ENCODE measurements at regions of chr19 and their contacts with region 1.

Region 1: GRCh38 chr19:16185123-16185767 is at the start of gene FAM32A:
- DNase-seq: peak; percentile 99
- ATAC-seq: peak; percentile 98
- H3K4me3 Mint-ChIP-seq: peak within 1 kb of the TSS; percentile 100
- H3K27ac Mint-ChIP-seq: peak within 1 kb of the TSS; percentile 97
- H3K4me1 Mint-ChIP-seq: peaks cover 26% of the 10 kb centered on the region
- H3K27me3 Mint-ChIP-seq: no peaks in the 10 kb centered on the region
- total RNA-seq, gene FAM32A: 46.3 to 48.2 TPM

Region 2: DNA sequence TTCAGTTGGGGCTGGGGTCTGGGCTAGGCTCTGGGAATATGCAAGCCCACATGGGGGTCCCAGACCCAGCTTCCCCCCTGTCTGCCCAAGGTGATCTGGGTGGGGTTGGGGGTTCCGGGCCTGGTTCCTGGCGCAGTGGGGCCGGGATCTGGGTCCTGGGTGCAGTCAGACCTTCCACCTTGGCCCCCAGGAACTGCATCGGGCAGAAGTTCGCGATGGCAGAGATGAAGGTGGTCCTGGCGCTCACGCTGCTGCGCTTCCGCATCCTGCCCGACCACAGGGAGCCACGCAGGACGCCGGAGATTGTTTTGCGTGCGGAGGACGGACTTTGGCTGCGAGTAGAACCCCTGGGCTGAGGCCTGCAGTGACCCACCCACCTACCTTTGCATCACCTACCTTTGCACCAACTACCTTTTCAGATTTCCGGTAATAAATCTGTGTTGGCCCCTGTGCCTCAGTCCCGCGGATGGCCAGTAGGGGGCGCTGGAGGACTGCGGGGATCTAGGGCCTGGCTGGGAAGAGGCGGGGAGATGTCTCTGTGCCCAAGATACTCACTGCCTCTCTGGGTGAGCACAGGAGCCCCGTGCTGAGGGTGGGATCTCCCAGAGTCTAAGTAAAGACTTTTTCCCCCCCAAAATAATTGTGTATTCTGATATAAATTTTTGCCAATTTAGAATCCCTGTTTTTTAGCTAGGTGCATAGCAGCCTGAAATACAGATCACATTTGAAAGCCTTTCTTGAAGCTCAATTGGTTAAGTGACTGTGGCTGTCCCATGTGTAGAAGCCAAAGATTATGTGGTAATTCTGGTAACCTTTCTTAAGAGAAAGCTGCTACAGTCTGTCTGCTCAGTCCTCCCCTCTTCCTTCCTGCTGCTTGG is 556.0 kb before region 1 on chr19:
- CTCF ChIA-PET with region 1: interaction called, 3 read pairs
- POLR2A ChIA-PET with region 1: no interaction called
- intact Hi-C with region 1: loop called (anchors 1 to 5 kb)
- DNase-seq: peak; percentile 93
- ATAC-seq: peak; percentile 95
- H3K4me3 Mint-ChIP-seq: no peak overlapping the region
- H3K27ac Mint-ChIP-seq: no peak overlapping the region
- H3K4me1 Mint-ChIP-seq: peaks cover 3% of the 10 kb centered on the region
- H3K27me3 Mint-ChIP-seq: peaks cover 4% of the 10 kb centered on the region

Region 3: DNA sequence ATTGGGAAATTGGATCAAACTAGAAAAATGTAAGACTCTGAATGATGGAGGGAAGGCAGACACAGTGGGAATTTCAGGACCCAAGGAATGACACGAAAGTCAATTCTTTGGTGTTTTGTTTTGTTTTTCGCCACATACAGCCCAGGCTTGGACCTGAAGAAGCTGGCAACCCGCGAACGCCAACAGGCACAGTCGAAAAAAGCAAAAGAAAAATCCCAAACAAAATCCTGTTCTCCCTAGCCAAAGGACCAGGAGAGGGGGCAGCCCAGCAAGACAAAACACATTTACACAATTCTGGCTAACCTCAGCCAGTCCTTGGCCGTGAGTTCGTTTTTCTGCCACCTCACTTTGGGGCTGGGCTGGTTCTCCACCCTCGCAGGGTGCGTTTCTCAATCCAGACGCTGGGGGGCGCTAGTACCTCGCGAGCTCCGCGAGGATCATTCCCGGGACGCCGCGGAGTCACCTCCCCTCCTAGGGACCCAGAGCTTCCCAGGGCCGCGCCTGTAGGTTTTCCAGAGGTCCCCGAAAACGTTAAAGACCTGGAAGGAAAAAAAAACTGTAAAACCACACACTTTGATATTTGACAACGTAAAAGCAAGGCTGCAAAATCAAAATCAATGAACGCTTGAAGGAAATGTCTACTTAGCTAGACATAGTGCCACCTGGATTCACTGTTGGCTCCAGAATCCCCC is 143.8 kb before region 1 on chr19:
- CTCF ChIA-PET with region 1: interaction called, 53 read pairs
- POLR2A ChIA-PET with region 1: no interaction called
- intact Hi-C with region 1: loop called (anchors 1 kb)
- DNase-seq: peak; percentile 87
- ATAC-seq: peak; percentile 85
- H3K4me3 Mint-ChIP-seq: no peak overlapping the region
- H3K27ac Mint-ChIP-seq: no peak overlapping the region
- H3K4me1 Mint-ChIP-seq: peaks cover 4% of the 10 kb centered on the region
- H3K27me3 Mint-ChIP-seq: peaks cover 2% of the 10 kb centered on the region

Region 4: DNA sequence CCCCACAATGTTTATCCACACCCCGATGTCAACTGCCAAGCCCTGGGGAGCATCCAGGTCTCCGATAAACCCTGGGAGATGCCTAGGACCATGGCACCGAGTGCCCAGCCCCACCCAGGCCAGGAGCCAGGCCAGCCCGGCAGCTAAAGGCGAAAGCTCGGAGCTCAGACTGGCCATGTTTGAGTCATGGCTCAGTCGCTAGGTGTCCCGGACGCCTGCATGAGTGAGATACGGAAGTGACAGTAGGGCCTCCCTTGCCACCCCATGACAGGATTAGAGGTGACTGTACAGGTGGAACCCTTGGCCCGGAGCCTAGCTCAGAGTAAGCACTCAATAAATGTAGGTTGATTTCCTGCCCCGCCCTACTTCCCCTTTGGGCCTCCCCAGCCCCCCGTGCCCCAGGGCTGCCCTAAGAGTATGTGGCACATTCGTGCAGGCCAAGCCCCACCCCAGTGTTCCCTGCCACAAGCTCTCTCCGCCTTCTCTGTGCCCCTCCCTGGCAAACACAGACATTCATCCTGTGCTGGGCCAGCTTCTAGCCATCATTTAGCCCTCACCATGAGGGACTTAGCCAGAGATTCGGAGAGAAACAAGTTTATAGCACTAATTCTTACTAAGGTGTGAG is 114.8 kb before region 1 on chr19:
- CTCF ChIA-PET with region 1: interaction called, 13 read pairs
- POLR2A ChIA-PET with region 1: interaction called, 3 read pairs
- intact Hi-C with region 1: loop called (anchors 1 kb)
- DNase-seq: peak; percentile 92
- ATAC-seq: peak; percentile 97
- H3K4me3 Mint-ChIP-seq: no peak overlapping the region
- H3K27ac Mint-ChIP-seq: no peak overlapping the region
- H3K4me1 Mint-ChIP-seq: peaks cover 42% of the 10 kb centered on the region
- H3K27me3 Mint-ChIP-seq: no peaks in the 10 kb centered on the region

Region 5: GRCh38 chr19:16143399-16144245 is 41.6 kb before region 1 on chr19 and contains the start of gene HSH2D:
- CTCF ChIA-PET with region 1: interaction called, 3 read pairs
- POLR2A ChIA-PET with region 1: interaction called, 3 read pairs
- intact Hi-C with region 1: loop called in 1 of 2 experiments (anchors 1 kb)
- DNase-seq: peak; percentile 91
- ATAC-seq: peak; percentile 100
- H3K4me3 Mint-ChIP-seq: peak within 1 kb of the TSS; percentile 94
- H3K27ac Mint-ChIP-seq: peak within 1 kb of the TSS; percentile 93
- H3K4me1 Mint-ChIP-seq: peaks cover 24% of the 10 kb centered on the region
- H3K27me3 Mint-ChIP-seq: no peaks in the 10 kb centered on the region
- total RNA-seq, gene HSH2D: 31.2 to 38.2 TPM

Region 6: GRCh38 chr19:16495982-16496612 is 310.9 kb after region 1 on chr19 and contains the starts of genes C19orf44 and CALR3:
- CTCF ChIA-PET with region 1: no interaction called
- POLR2A ChIA-PET with region 1: no interaction called
- intact Hi-C with region 1: loop called in 1 of 2 experiments (anchors 1 kb)
- DNase-seq: peak; percentile 99
- ATAC-seq: peak; percentile 99
- H3K4me3 Mint-ChIP-seq: peak within 1 kb of the TSS; percentile 89
- H3K27ac Mint-ChIP-seq: peak within 1 kb of the TSS; percentile 79
- H3K4me1 Mint-ChIP-seq: peaks cover 13% of the 10 kb centered on the region
- H3K27me3 Mint-ChIP-seq: no peaks in the 10 kb centered on the region
- total RNA-seq, gene C19orf44: 2.9 to 4.0 TPM
- total RNA-seq, gene CALR3: not detected

Measured in activated CD4-positive, alpha-beta T cell treated with anti-CD3 and anti-CD28 coated beads for 36 hours (primary cell).